Ascending aorta (tissue), 2 donors: ENCODE measurements at regions of chr11 and their contacts with region 1.

Region 1: GRCh38 chr11:27158722-27159679 is 118.4 kb downstream of the BBOX1 start:
- DNase-seq: peak in 1 of 2 donors; percentile 79
- H3K4me3 ChIP-seq: no peak overlapping the region
- H3K27ac ChIP-seq: peak overlapping the region in 1 of 2 donors; percentile 32
- H3K4me1 ChIP-seq: peaks cover 0 to 4% of the 10 kb centered on the region in 2 donors
- H3K27me3 ChIP-seq: no peaks in the 10 kb centered on the region
- CTCF ChIP-seq: peak; percentile 76 to 88 (median 84)

Region 2: GRCh38 chr11:26297189-26297975 is 861.6 kb before region 1 on chr11:
- intact Hi-C with region 1: loop called (anchors 10 kb)
- DNase-seq: no peak
- H3K4me3 ChIP-seq: no peak overlapping the region
- H3K27ac ChIP-seq: no peak overlapping the region
- H3K4me1 ChIP-seq: no peaks in the 10 kb centered on the region
- H3K27me3 ChIP-seq: no peaks in the 10 kb centered on the region
- CTCF ChIP-seq: peak in 2 of 3 experiments; percentile 30 to 35

Region 3: DNA sequence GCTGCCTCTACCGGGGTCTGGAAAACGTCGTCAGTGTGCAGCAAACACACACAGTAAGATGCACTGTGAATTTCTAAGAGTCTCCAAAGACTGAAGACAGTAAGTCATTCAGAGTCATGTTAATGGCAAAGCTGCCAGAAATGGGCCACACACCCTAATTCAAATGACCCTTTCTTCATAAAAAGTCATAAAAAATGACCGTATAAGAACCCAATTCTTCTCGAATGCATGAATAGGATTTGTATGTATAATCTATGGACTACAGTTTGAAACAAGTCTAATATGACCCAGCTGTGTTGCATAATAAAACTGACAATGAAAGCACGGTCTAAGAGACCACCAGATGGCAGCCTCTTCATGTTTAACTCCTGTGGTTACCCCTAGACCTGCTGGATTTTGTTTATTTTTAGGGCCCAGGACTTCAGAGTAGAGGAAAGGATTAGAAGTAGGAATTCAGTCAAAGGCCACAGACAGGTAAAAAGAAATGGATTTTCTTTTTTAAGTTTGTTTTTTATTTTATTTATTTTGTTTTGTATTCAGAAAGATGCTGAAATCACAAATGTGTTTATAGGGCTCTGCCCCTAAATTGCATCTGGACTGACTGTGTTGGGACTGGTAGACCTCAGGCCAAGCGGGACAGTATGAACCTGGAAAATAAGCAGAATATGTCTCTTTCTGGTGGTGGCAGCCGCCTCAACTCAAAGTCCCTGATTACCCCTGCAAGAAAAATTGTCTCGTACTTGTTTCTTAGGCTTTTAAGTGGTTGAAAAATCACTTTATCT is 405.1 kb before region 1 on chr11:
- intact Hi-C with region 1: loop called (anchors 1 kb)
- DNase-seq: peak in 1 of 2 donors; percentile 79
- H3K4me3 ChIP-seq: no peak overlapping the region
- H3K27ac ChIP-seq: no peak overlapping the region
- H3K4me1 ChIP-seq: peaks cover 0 to 9% of the 10 kb centered on the region in 2 donors
- H3K27me3 ChIP-seq: no peaks in the 10 kb centered on the region
- CTCF ChIP-seq: peak; percentile 61 to 91 (median 81)